MCF 10A (cell line): ENCODE measurements at regions of chr15 and their contacts with region 1.

Region 1: DNA sequence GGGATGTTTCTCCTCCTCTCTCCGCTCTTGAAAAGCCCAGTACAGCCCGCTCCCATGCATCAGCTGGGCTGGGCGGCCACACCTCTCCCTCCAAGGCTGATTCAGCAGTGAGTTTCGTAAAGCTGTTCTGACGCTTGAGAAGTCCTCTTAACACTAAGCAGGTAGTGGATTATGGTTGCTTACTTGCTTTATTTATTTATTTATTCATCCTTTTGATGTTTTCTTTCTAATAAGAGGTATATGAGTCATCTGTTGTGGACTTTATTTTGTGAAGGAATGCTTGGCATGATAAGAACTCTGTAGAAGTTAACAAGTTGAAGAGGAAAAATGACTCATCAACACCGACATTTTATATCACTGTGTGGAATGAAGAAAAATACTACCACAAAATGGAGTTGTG is 285.0 kb downstream of the SQOR start:
- DNase-seq: peak; percentile 83
- H3K4me3 Mint-ChIP-seq: peak overlapping the region; percentile 7
- H3K27ac Mint-ChIP-seq: peak overlapping the region; percentile 84
- H3K4me1 Mint-ChIP-seq: peaks cover 6% of the 10 kb centered on the region
- H3K27me3 Mint-ChIP-seq: no peaks in the 10 kb centered on the region
- CTCF ChIP-seq: no peak

Region 2: DNA sequence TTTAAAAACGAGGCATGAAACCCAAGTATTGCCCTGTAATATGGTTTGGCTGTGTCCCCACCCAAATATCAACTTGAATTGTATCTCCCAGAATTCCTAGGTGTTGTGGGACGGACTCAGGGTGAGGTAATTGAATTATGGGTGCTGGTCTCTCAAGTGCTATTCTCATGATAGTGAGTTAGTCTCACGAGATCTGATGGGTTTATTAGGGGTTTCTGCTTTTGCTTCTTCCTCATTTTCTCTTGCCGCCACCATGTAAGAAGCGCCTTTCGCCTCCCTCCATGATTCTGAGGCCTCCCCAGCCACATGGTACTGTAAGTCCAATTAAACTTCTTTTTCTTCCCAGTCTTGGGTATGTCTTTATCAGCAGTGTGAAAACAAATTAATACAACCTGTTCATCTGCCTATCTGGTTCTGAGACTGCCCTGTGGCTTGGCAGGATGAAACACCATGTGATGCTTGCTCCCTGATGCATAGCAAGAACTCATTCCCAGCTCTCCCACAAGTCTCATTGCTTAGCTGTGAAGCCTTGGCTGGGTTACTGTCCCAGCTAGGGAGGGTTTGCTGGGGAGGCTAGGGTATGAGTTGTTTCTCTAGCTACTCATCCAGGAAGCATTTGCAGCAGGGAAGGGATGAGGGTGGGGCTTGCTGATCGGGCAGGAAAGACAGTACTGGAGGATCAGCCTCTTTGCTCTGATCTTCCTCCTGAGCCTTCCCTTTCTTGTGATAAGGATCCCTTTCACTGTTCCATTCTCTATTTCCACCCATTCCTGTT is 288.7 kb before region 1 on chr15:
- CTCF ChIA-PET with region 1: no interaction called
- POLR2A ChIA-PET with region 1: no interaction called
- intact Hi-C with region 1: no loop called
- DNase-seq: peak; percentile 59
- H3K4me3 Mint-ChIP-seq: peak overlapping the region; percentile 52
- H3K27ac Mint-ChIP-seq: peak overlapping the region; percentile 55
- H3K4me1 Mint-ChIP-seq: peaks cover 11% of the 10 kb centered on the region
- H3K27me3 Mint-ChIP-seq: no peaks in the 10 kb centered on the region
- CTCF ChIP-seq: no peak

Region 3: DNA sequence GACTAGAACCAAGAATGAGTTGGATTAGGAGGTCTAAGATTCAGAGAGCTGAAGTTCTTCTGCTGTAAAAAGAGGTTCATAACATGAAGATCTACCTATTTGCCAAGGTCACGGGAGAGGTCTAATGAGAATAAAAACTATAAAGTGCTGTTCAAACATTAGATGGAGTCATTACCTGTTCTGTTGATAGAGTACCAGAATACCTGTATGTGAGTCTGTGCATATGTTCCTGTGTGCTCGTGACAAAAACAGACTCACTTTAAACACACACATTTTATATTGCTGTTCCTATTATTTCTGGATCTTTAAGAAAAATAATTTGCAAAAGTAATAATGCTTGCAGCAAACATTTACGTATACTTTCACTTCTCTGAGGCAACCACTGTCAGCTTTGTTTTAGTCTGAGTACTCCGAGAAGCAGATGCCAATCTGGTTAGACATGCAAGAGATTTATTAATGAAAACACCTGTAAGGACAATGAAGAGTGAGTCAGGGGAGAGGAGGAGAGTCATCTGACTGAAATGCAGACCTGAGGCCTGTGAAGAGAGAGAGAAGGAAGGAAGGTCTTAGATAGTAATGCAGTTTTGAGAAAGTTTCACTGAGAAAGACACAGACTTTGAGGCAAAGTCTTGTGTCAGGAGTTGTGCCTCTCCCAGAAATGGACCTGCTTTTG is 63.8 kb before region 1 on chr15:
- CTCF ChIA-PET with region 1: interaction called, 6 read pairs
- POLR2A ChIA-PET with region 1: interaction called, 3 read pairs
- intact Hi-C with region 1: loop called (anchors 5 kb)
- DNase-seq: peak; percentile 46
- H3K4me3 Mint-ChIP-seq: peak overlapping the region; percentile 8
- H3K27ac Mint-ChIP-seq: peak overlapping the region; percentile 74
- H3K4me1 Mint-ChIP-seq: peaks cover 23% of the 10 kb centered on the region
- H3K27me3 Mint-ChIP-seq: no peaks in the 10 kb centered on the region
- CTCF ChIP-seq: no peak

Region 4: GRCh38 chr15:45871121-45871985 is 48.5 kb before region 1 on chr15:
- CTCF ChIA-PET with region 1: interaction called, 4 read pairs
- POLR2A ChIA-PET with region 1: interaction called, 16 read pairs
- intact Hi-C with region 1: no loop called
- DNase-seq: peak; percentile 50
- H3K4me3 Mint-ChIP-seq: peak overlapping the region; percentile 17
- H3K27ac Mint-ChIP-seq: peak overlapping the region; percentile 44
- H3K4me1 Mint-ChIP-seq: peaks cover 40% of the 10 kb centered on the region
- H3K27me3 Mint-ChIP-seq: no peaks in the 10 kb centered on the region
- CTCF ChIP-seq: no peak

Region 5: DNA sequence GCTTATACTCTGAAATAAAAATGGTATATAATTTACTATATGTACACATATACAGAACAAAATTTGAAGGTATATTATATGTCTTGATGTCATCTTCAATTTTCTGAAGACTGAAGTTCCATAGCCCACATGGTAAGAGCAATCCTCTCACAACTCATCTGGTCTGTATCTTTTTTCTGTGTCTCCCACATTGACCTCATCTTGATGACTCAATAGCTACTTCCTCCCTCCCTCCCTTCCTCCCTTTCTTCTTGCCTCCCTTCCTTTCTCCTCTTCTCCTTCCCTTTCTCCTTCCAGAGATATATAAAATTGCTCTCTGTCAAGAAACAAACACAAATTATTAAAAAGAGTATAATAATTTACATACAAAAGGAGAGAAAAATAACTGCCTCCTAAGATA is 16.5 kb before region 1 on chr15:
- CTCF ChIA-PET with region 1: no interaction called
- POLR2A ChIA-PET with region 1: no interaction called
- intact Hi-C with region 1: no loop called
- DNase-seq: no peak
- H3K4me3 Mint-ChIP-seq: no peak overlapping the region
- H3K27ac Mint-ChIP-seq: no peak overlapping the region
- H3K4me1 Mint-ChIP-seq: no peaks in the 10 kb centered on the region
- H3K27me3 Mint-ChIP-seq: no peaks in the 10 kb centered on the region
- CTCF ChIP-seq: no peak

Region 6: DNA sequence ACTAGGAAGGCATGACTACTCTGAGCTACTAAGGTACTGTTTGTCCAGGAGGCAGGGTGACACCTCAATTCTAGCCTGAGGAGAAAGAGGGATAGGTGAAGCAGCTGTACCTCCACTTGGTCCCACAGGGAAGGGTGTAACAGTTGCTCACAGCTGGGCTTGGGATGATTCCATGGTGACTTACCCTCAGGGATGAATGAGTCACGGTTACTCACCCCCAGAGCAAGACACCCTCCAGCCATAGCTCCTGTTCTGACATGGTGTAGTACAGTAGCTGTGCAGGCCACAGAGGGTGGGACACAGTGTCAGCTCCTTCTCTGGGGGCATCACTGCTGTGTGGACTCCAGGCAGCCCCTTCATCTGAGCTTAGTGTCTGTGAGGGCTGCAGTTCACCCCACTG is 928.9 kb after region 1 on chr15:
- CTCF ChIA-PET with region 1: no interaction called
- POLR2A ChIA-PET with region 1: no interaction called
- intact Hi-C with region 1: no loop called
- DNase-seq: peak; percentile 0
- H3K4me3 Mint-ChIP-seq: no peak overlapping the region
- H3K27ac Mint-ChIP-seq: no peak overlapping the region
- H3K4me1 Mint-ChIP-seq: peaks cover 18% of the 10 kb centered on the region
- H3K27me3 Mint-ChIP-seq: no peaks in the 10 kb centered on the region
- CTCF ChIP-seq: no peak